Common myeloid progenitor, CD34-positive (primary cell): ENCODE measurements at regions of chr11 and their contacts with region 1.

Region 1: DNA sequence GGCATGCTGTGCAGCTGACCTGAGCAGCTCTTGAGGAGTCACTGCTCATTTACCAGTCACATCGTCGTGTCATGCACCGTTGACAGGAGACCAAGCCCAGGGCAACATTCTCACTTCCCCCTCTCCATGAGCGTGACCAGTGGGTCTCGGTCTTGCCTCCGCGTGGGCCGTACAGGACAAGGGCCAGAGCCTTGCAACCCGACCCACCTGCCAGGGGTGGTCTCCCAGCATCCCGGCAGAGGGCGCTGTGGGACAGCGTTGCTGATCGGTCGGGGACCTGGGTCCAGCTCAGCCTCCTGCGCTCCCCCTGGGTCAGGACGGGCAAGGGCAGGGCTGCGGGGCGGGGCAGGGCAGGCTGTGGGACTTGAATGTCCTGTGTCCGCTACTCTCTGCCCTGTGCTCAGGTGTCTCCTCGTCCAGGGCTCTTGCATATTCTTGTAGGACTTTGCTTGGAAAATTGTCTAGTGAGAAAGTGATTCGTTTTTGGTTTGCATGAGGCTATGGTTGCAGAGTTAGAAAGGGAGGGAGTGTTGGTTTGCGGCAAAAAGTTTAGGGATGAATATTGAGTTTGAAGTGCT is 16.2 kb downstream of the EIF4G2 start:
- DNase-seq: peak; percentile 72 to 80 (median 76)
- H3K4me3 ChIP-seq: peak overlapping the region in 4 of 7 experiments; percentile 25 to 69 (median 40)
- H3K27ac ChIP-seq: no peak overlapping the region
- H3K4me1 ChIP-seq: peaks cover 0 to 15% (median 6%) of the 10 kb centered on the region in 4 experiments
- H3K27me3 ChIP-seq: peaks cover 0 to 4% (median 0%) of the 10 kb centered on the region in 5 experiments

Region 2: GRCh38 chr11:10651656-10652381 is 140.7 kb before region 1 on chr11:
- CTCF ChIA-PET with region 1: no interaction called
- POLR2A ChIA-PET with region 1: no interaction called
- DNase-seq: no peak
- H3K4me3 ChIP-seq: no peak overlapping the region
- H3K27ac ChIP-seq: no peak overlapping the region
- H3K4me1 ChIP-seq: peaks cover 6 to 23% (median 14%) of the 10 kb centered on the region in 4 experiments
- H3K27me3 ChIP-seq: no peaks in the 10 kb centered on the region

Region 3: DNA sequence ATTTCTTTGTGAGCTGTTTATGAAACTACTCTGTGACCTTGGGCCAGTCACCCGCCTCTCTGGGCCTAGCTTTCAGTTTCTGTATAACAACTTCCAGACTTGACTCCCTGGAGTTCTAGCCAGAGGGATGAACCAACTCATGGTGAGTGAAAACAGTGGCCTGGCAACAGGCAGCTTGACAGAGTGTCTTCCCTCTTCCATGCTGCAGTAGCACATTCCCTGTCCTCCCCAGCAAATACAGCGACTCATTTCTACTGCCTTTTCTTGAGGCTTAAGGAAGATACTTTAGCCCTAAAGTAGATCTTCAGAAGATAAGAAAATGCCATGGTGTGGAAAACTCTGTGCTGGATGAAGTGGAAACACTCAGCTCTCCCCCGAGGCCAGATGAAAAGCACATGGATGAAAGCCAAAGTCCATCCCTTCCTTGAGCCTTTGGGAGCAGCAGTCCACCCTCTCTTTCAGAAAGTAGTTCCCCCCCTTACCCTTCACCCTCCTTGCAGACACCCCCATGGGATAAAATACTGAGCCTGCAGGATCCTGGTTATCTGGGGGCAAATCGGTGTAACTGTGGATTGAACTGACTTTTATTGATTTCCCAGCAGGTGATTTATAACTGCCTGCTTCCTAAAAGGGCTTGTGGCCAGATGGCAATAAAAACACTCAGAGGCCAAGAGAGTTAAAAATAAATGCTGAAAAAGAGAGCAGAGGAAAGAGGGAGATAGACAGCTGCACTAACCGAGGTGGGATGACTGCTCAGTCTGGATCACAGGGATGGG is 123.0 kb before region 1 on chr11:
- CTCF ChIA-PET with region 1: no interaction called
- POLR2A ChIA-PET with region 1: no interaction called
- DNase-seq: peak in 1 of 3 donors; percentile 34
- H3K4me3 ChIP-seq: no peak overlapping the region
- H3K27ac ChIP-seq: no peak overlapping the region
- H3K4me1 ChIP-seq: peaks cover 6 to 56% (median 39%) of the 10 kb centered on the region in 4 experiments
- H3K27me3 ChIP-seq: no peaks in the 10 kb centered on the region

Region 4: GRCh38 chr11:10778217-10778970 is 14.1 kb before region 1 on chr11:
- CTCF ChIA-PET with region 1: interaction called, 36 read pairs
- POLR2A ChIA-PET with region 1: interaction called, 5 read pairs
- DNase-seq: no peak
- H3K4me3 ChIP-seq: no peak overlapping the region
- H3K27ac ChIP-seq: peak overlapping the region in 1 of 2 experiments; percentile 36
- H3K4me1 ChIP-seq: peaks cover 0 to 18% (median 15%) of the 10 kb centered on the region in 4 experiments
- H3K27me3 ChIP-seq: no peaks in the 10 kb centered on the region

Region 5: DNA sequence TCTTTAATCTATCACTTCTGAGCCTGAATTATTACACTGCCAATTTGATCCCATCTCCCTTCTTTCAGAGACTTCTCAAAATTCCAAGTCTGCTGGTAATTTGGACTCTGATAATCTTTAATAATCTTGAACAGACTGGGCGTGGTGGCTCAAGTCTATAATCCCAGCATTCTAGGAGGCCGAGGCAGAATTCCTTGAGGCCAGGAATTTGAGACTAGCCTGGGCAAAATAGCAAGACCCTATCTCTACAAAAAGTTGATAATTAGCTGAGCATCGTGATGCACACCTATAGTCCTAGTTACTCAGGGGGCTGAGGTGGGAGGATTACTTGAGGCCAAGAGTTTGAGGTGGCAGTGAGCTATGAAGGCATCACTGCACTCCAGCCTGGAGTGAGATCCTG is 49.1 kb after region 1 on chr11:
- CTCF ChIA-PET with region 1: no interaction called
- POLR2A ChIA-PET with region 1: no interaction called
- DNase-seq: no peak
- H3K4me3 ChIP-seq: no peak overlapping the region
- H3K27ac ChIP-seq: no peak overlapping the region
- H3K4me1 ChIP-seq: no peaks in the 10 kb centered on the region
- H3K27me3 ChIP-seq: no peaks in the 10 kb centered on the region

Region 6: DNA sequence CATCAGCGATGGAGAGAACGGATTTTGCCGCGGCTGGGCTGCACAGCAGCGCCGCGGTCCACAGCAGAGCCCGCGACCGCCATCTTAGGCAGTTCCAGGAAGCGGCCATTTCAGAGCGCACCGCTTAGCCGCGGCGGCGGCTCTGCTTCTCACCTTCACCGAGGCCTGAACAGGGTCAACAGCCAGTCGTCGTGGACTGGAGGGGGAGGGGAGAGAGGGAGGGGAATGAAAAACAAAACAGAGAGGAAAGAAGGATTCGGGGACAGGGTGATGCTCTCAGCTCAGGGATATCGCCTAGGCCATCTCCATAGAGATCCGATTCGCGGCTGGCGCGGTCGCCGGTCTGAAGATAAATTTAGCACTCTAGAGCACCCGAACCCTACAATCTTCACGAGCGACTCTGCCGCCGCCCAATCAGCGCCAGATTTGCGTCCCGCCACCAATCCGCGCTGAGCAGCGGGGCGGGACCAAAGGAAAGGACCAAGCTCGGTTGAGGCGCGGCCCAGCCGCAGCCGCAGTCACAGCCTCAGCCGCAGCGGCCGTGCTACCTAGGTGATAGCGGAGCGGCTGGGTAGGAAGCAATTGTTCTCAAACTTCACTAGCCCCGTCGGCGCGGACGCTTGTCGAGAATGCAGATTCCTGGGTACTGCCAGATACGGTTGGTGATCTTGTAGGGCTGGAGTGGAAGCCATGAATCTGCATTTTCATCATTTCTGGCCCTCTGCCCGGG is 65.4 kb after region 1 on chr11 and contains the start of gene ZBED5:
- CTCF ChIA-PET with region 1: interaction called, 13 read pairs
- POLR2A ChIA-PET with region 1: interaction called, 3 read pairs
- DNase-seq: peak; percentile 98 to 99 (median 99)
- H3K4me3 ChIP-seq: peak within 1 kb of the TSS; percentile 95 to 100 (median 99)
- H3K27ac ChIP-seq: peak within 1 kb of the TSS; percentile 89 to 96
- H3K4me1 ChIP-seq: peaks cover 11 to 26% (median 20%) of the 10 kb centered on the region in 4 experiments
- H3K27me3 ChIP-seq: no peaks in the 10 kb centered on the region

Region 7: GRCh38 chr11:10933455-10934292 is 141.2 kb after region 1 on chr11:
- CTCF ChIA-PET with region 1: interaction called, 22 read pairs
- POLR2A ChIA-PET with region 1: no interaction called
- DNase-seq: peak; percentile 88 to 95 (median 93)
- H3K4me3 ChIP-seq: peak overlapping the region in 6 of 7 experiments; percentile 46 to 79 (median 68)
- H3K27ac ChIP-seq: no peak overlapping the region
- H3K4me1 ChIP-seq: peaks cover 3 to 28% (median 22%) of the 10 kb centered on the region in 4 experiments
- H3K27me3 ChIP-seq: peaks cover 0 to 41% (median 22%) of the 10 kb centered on the region in 5 experiments